ENCODE measurements at regions of chr3 and their contacts with region 1.

Region 1: DNA sequence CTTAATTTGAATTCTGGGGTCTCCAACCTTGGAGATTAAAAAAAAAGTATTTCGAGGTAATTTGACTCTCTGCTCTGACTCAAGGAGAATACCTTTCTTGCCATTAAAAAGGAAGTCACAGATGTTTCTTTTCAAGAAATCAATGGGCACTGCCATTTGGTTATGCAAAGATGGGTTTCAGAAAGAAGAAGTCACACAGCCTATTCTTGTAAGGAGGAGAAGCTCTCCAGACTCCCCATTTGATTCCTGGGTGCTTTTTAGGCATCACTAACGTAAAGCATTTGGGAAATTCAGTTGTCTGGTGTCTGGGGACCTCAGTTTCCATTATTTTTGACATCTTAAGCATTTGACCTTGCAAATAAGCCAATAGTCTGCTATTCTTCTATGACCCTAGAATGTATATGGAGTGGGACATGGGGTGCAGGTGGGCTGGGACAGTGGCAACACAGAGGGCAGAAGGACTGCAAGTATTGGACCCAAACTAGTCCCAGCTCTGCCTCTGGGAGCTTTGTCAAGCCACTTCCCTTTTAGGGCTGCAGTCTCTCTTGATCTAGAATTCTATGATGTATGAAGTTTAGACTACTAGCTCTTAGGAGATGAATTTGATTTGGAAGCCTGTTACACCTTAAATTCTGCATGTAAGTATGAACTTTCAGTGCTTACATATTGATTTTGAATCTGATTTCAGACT is 27.8 kb downstream of the IL5RA start:
- DNase-seq: no peak
- ATAC-seq: no peak
- H3K4me3 ChIP-seq: no peak overlapping the region
- H3K27ac ChIP-seq: no peak overlapping the region
- H3K4me1 ChIP-seq: no peaks in the 10 kb centered on the region
- H3K27me3 ChIP-seq: no peaks in the 10 kb centered on the region
- CTCF ChIP-seq: no peak

Region 2: GRCh38 chr3:2993736-2994135 is 88.6 kb before region 1 on chr3:
- CTCF ChIA-PET with region 1: no interaction called
- POLR2A ChIA-PET with region 1: no interaction called
- in situ Hi-C with region 1: no loop called
- intact Hi-C with region 1: no loop called
- DNase-seq: no peak
- ATAC-seq: no peak
- H3K4me3 ChIP-seq: no peak overlapping the region
- H3K27ac ChIP-seq: no peak overlapping the region
- H3K4me1 ChIP-seq: no peaks in the 10 kb centered on the region
- H3K27me3 ChIP-seq: no peaks in the 10 kb centered on the region
- CTCF ChIP-seq: no peak

Region 3: DNA sequence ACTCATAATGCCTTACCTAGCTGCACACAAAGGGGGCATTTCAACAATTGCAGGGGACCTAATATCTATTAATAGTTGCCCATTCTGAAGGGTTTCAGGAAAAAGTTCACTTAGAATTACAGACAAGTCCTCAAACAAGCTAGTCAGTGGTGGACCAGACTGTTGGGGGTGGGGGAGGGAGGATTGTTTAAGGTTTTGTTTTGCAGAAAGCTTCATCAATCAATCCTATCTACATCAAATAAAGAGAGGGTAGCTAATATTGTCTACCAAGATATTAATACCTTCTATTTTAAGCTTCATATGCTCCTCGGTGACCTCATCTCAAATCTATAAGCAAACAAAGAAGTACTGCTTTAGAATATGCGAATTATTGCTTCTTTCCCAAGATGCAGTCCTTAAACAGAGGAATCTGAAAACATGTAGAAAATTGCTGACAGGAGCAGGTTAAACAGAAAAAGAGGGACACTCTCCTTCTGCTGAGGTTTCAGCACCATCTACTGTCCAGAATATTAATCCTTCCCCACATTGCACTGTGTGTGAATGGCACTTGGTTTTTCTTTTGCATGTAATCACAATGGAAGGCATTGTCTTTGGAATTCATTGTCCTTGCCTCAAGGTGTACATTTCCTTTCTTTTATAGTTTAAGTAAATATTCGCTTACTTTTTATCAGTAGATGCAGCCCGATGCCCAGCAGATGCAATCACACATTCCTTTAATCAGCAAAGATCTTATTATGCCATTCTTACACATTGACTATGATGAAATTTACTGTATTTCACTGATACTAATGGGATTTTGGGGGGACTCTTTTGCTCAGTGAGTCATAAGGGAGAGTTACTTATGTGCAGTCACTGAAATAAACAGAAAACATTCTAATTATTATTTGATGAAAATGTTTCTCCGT is 66.9 kb before region 1 on chr3:
- CTCF ChIA-PET with region 1: no interaction called
- POLR2A ChIA-PET with region 1: interaction called, 20 read pairs
- in situ Hi-C with region 1: no loop called
- intact Hi-C with region 1: no loop called
- DNase-seq: peak; percentile 15
- ATAC-seq: peak; percentile 78; the same call in 1 of the 2 replicates
- H3K4me3 ChIP-seq: no peak overlapping the region
- H3K27ac ChIP-seq: no peak overlapping the region
- H3K4me1 ChIP-seq: no peaks in the 10 kb centered on the region
- H3K27me3 ChIP-seq: no peaks in the 10 kb centered on the region
- CTCF ChIP-seq: peak; percentile 61; the same call in 1 of the 2 replicates

Region 4: DNA sequence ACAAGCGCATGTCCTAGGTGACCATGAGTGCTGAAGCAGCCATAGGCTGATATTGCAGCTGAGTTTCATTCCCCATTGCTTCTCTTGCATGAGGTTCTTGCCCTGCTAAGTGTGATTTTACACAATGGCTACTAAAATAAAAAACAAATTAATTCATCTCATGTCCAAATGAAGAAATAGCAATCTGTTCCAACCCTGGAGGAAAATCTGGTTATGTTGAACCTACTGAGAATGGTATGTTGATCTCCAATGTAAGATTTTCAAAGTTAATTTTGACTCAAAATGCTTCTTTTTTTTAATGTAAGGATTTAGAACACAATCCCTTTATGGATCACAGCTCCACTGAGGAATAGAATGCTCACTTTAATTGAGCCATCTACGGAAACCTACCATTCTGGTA is 351.3 kb after region 1 on chr3:
- CTCF ChIA-PET with region 1: no interaction called
- POLR2A ChIA-PET with region 1: no interaction called
- in situ Hi-C with region 1: no loop called
- intact Hi-C with region 1: no loop called
- DNase-seq: no peak
- ATAC-seq: no peak
- H3K4me3 ChIP-seq: no peak overlapping the region
- H3K27ac ChIP-seq: no peak overlapping the region
- H3K4me1 ChIP-seq: no peaks in the 10 kb centered on the region
- H3K27me3 ChIP-seq: no peaks in the 10 kb centered on the region
- CTCF ChIP-seq: no peak